GM13976 (cell line): ENCODE measurements at regions of chr1 and their contacts with region 1.

Region 1: DNA sequence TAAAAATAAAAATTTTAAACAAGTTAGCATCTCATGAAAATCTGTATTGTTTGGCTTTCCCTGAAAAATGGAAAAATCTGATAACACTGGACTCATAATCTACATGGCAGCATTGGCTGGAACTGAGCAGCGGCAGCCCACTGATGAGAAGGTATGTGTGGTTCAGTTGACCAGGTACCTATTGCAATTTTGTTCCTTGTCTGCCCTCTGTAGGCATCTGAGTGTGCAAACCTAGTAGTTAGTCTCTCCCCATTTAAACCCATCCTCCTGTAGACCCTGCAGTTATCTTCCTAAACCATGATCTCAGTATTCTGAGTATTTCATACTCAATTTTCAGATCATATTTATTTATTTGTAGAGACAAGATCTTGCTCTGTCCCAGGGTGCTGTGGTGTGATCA is 59.4 kb upstream of the SERBP1 start:
- DNase-seq: peak; percentile 54
- CTCF ChIP-seq: peak; percentile 40

Region 2: DNA sequence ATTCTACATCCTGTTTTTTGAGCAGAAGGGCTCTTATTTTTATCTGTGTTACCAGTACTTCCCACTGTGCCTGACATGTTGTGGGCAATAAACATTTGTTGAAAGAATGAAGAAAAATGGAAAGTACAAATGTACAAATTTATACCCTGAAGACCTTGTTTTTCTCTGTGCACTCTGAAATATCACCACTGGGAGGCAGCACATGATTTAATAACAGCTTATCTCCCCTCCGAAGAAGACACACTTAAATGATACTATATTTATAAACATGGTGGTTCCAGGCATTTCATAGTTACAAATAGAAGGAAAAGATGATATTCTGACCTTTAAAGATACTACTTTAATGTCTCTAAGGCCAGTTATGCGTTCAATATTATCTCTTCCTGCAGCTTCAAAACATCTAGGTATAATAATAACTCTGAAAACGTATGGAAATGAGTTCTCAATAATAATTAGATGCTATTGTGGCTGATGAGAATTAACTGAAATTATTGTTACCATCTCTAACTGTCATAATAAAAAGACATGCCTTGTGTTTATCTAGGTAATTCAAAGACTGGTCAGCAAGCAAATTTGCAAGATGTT is 724.6 kb before region 1 on chr1:
- in situ Hi-C with region 1: loop called (anchors 25 kb)
- DNase-seq: peak; percentile 31
- CTCF ChIP-seq: peak; percentile 63

Region 3: GRCh38 chr1:67019600-67020136 is 470.0 kb before region 1 on chr1:
- in situ Hi-C with region 1: loop called (anchors 25 kb)
- DNase-seq: no peak
- CTCF ChIP-seq: no peak

Region 4: DNA sequence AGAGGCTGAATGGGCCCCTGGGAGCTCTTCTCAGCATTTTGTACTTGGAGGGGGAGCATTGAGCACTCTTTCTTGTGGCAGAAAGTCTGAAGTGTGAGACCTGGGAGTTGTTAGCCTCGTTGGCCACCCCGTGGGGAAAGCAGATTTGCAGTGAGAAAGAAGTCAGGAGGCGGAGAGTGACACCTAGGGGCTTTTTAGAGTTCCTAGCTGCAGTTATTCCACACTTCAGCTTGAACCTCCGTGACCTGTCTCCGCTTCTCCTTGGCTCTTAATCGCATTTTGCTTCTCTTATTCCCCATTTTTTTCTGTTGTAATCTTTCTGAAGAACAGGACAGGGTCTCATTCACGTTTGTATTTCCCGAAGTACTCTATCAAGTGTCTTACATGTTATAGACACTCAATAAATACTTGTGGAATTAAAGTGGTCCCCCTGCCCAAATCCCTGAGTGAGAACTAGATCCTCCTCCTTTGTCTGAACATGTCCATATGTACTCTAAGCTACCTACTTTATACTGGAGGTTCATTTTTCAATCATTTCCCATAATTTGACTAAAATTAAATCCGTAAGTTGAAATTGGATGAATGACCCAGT is 340.4 kb before region 1 on chr1:
- in situ Hi-C with region 1: loop called (anchors 10 kb)
- DNase-seq: peak; percentile 73
- CTCF ChIP-seq: peak; percentile 56

Region 5: GRCh38 chr1:67230539-67230938 is 259.1 kb before region 1 on chr1:
- in situ Hi-C with region 1: loop called (anchors 10 kb)
- DNase-seq: no peak
- CTCF ChIP-seq: no peak

Region 6: DNA sequence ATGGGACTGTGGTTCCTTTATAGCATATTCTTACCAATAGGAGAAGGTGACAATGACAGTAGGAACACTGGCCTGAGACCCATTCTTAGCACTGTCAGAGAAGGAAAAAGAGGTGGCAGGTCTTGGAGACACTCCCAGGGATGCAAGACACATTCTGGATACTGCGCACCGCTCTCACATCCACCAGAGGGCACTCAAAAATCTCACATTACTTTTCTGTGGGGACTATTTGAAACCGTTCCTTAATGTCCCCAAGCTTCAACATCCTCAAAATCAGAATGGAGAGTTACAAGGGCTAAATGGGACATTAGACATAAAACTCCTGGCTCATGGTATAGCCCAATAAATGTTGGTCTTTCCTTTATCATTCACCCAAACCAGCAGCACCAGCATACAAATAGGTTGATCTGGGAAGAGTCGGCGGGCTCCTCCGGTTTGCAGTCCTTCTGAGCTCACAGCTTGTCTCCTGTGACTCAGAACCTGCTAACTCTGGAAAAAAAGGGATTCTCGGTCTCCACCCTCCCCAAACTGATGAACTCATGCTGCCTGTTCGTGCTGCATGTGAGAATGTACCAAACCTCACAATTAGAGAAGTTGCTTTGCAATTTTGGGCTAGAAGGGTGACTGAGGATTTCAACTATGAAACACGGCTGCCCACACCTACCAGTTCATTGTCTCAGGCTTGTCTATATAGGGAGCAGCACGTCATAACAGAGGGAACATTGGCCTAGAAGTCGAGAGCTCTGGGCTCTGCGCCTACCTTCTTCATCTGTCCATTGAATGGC is 141.8 kb before region 1 on chr1:
- in situ Hi-C with region 1: loop called (anchors 10 kb)
- DNase-seq: no peak
- CTCF ChIP-seq: peak; percentile 48